B cell (primary cell): ENCODE measurements at regions of chr4 and their contacts with region 1.

Region 1: GRCh38 chr4:148447681-148448080 is 5.5 kb upstream of the NR3C2 start:
- DNase-seq: peak; percentile 34
- ATAC-seq: no peak
- H3K4me3 ChIP-seq: no peak overlapping the region
- H3K4me3 Mint-ChIP-seq: no peak overlapping the region
- H3K27ac ChIP-seq: no peak overlapping the region
- H3K27ac Mint-ChIP-seq: no peak overlapping the region
- H3K4me1 ChIP-seq: peaks cover 12 to 24% of the 10 kb centered on the region in 2 donors
- H3K4me1 Mint-ChIP-seq: peaks cover 15% of the 10 kb centered on the region
- H3K27me3 ChIP-seq: peaks cover 0 to 12% (median 4%) of the 10 kb centered on the region in 4 experiments
- H3K27me3 Mint-ChIP-seq: no peaks in the 10 kb centered on the region
- CTCF ChIP-seq: no peak

Region 2: DNA sequence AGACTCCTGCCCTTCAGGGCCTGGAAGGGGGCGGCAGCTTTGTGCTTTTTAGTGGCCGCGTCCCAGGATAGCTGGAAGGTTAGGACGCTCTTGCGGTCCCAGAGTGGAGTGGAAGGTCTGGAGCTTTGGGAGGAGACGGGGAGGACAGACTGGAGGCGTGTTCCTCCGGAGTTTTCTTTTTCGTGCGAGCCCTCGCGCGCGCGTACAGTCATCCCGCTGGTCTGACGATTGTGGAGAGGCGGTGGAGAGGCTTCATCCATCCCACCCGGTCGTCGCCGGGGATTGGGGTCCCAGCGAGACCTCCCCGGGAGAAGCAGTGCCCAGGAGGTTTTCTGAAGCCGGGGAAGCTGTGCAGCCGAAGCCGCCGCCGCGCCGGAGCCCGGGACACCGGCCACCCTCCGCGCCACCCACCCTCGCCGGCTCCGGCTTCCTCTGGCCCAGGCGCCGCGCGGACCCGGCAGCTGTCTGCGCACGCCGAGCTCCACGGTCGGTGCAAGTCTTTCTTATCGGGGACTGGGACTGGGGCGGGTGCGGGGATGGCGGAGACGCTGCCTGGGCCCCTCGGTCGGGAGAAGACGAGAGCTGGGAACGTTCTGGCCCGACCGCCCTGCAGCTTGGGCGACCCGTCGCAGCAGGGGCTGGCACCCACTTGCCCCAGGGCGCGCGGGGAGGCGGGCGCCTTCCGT is 966.6 kb before region 1 on chr4 and contains the start of gene EDNRA:
- CTCF ChIA-PET with region 1: no interaction called
- POLR2A ChIA-PET with region 1: no interaction called
- intact Hi-C with region 1: no loop called
- DNase-seq: no peak
- ATAC-seq: no peak
- H3K4me3 ChIP-seq: no peak within 1 kb of the TSS
- H3K4me3 Mint-ChIP-seq: no peak within 1 kb of the TSS
- H3K27ac ChIP-seq: no peak within 1 kb of the TSS
- H3K27ac Mint-ChIP-seq: no peak within 1 kb of the TSS
- H3K4me1 ChIP-seq: no peaks in the 10 kb centered on the region
- H3K4me1 Mint-ChIP-seq: no peaks in the 10 kb centered on the region
- H3K27me3 ChIP-seq: peaks cover 0 to 16% (median 2%) of the 10 kb centered on the region in 4 experiments
- H3K27me3 Mint-ChIP-seq: peaks cover 26% of the 10 kb centered on the region
- CTCF ChIP-seq: no peak
- total RNA-seq, gene EDNRA: not detected in 2 replicates

Region 3: DNA sequence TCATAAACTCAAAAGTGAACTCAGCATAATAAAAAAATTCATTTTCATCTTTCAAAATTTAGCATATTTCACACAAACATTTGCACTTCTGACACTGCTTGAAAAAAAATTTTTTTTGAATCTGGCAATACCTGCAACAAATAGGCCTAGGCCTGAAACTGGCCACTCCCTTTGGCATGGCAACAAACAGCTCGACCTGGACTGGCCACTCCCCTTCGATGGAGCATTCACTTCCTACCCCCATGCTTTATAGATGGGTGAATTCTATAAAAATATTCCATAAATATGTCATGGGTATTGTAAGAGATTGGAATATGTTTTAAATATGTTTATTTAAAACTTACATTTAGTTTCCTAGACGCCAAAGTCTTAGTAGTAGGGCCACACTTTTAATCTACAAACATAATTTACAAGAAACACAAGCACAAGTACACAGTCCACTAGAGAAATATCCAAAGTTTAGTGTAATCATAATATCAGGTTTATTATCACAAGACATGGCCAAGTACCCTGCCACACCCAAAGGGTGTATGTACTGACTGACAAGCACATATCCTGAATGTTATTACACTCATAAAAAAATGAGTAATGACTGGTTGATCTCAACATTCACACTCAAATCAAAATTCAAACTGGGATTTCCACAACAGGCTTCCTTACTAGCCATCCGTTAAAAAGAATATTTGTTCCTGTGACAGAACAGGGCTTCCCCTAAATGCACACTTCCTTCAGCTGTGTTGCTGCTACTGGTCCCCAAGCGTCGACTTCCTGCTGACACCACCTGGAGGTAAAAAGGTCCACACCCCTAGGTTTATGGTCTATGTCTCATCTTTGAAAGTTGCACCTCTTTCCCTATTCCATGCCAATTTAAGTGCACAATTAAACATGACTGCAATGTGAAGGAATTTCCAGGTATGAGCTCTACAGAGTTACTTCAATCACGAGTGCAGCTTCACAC is 277.0 kb before region 1 on chr4:
- CTCF ChIA-PET with region 1: no interaction called
- POLR2A ChIA-PET with region 1: interaction called, 12 read pairs
- intact Hi-C with region 1: no loop called
- DNase-seq: no peak
- ATAC-seq: no peak
- H3K4me3 ChIP-seq: no peak overlapping the region
- H3K4me3 Mint-ChIP-seq: no peak overlapping the region
- H3K27ac ChIP-seq: no peak overlapping the region
- H3K27ac Mint-ChIP-seq: no peak overlapping the region
- H3K4me1 ChIP-seq: no peaks in the 10 kb centered on the region
- H3K4me1 Mint-ChIP-seq: peaks cover 13% of the 10 kb centered on the region
- H3K27me3 ChIP-seq: no peaks in the 10 kb centered on the region
- H3K27me3 Mint-ChIP-seq: no peaks in the 10 kb centered on the region
- CTCF ChIP-seq: no peak

Region 4: GRCh38 chr4:148355442-148356123 is 92.1 kb before region 1 on chr4:
- CTCF ChIA-PET with region 1: no interaction called
- POLR2A ChIA-PET with region 1: no interaction called
- intact Hi-C with region 1: no loop called
- DNase-seq: no peak
- ATAC-seq: no peak
- H3K4me3 ChIP-seq: no peak overlapping the region
- H3K4me3 Mint-ChIP-seq: no peak overlapping the region
- H3K27ac ChIP-seq: no peak overlapping the region
- H3K27ac Mint-ChIP-seq: no peak overlapping the region
- H3K4me1 ChIP-seq: no peaks in the 10 kb centered on the region
- H3K4me1 Mint-ChIP-seq: peaks cover 11% of the 10 kb centered on the region
- H3K27me3 ChIP-seq: no peaks in the 10 kb centered on the region
- H3K27me3 Mint-ChIP-seq: no peaks in the 10 kb centered on the region
- CTCF ChIP-seq: no peak

Region 5: GRCh38 chr4:148850071-148850995 is 402.7 kb after region 1 on chr4:
- CTCF ChIA-PET with region 1: no interaction called
- POLR2A ChIA-PET with region 1: no interaction called
- intact Hi-C with region 1: no loop called
- DNase-seq: no peak
- ATAC-seq: no peak
- H3K4me3 ChIP-seq: no peak overlapping the region
- H3K4me3 Mint-ChIP-seq: no peak overlapping the region
- H3K27ac ChIP-seq: no peak overlapping the region
- H3K27ac Mint-ChIP-seq: no peak overlapping the region
- H3K4me1 ChIP-seq: no peaks in the 10 kb centered on the region
- H3K4me1 Mint-ChIP-seq: no peaks in the 10 kb centered on the region
- H3K27me3 ChIP-seq: no peaks in the 10 kb centered on the region
- H3K27me3 Mint-ChIP-seq: no peaks in the 10 kb centered on the region
- CTCF ChIP-seq: no peak